ENCODE measurements at regions of chrX and their contacts with region 1.

Region 1: DNA sequence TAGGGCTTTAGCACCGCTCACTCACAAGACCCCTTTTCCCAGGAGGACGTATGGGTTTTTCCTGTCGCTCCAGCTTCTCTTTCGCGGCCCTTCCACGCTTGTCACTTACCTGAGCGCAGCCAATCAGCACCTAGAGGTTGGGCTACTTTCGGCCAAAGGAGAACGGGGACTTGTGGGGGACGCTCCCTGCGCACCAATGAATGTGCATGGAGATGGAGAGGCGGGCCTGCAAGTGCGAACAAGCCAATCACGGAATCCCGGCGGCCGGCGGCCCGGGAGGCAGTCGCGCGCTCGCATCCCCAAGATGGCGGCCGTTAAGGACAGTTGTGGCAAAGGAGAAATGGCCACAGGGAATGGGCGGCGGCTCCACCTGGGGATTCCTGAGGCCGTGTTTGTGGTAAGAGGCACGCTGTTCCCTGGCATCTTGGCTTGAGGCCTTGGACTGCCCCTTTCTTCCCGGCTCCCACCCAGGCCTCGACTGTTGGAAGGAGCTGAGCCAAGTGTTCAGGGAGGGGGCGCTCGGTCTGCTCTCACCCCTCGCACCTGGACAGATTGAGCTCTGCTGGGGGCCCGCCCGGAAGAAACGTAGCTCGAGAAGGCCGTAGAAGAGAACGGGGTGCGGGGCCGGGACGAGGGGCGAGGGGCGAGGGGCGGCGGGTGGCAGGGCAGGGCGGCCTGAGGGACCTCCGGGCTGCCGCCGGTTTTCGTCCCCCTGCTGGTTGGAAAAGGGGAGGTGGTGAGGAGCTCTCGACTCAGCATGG is at the start of gene VBP1:
- DNase-seq: peak; percentile 66
- ATAC-seq: peak; percentile 98
- H3K4me3 Mint-ChIP-seq: peak within 1 kb of the TSS; percentile 90
- H3K27ac Mint-ChIP-seq: peak within 1 kb of the TSS; percentile 91
- H3K4me1 Mint-ChIP-seq: peaks cover 18% of the 10 kb centered on the region
- H3K27me3 Mint-ChIP-seq: no peaks in the 10 kb centered on the region
- CTCF ChIP-seq: no peak
- total RNA-seq, gene VBP1: 40.6 and 43.9 TPM in 2 replicates

Region 2: DNA sequence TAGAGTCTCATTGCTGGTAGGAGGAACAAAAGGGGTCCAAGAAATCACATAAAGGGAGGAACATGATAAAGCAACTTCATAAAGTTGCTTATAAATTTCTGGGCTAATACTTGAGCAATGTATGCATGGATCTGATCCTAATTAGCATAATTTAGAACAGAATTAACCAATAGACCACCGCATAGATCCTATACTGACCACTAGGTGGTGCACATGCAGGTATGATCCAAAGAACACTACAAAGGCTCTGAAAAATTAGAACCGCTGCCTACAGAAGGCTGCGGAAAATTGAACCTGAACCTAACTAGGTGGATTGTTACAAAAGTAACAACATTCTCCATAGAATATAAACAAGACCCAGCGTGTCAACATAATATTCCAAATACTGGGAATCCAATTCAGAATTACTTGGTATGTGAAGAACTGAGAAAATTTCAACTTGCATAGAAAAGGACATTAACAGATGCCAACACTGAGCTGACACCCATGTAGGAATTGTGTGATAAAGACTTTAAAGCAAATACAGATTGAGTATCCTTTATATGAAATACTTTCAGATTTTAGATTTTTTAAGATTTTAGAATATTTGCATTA is 121.8 kb before region 1 on chrX:
- CTCF ChIA-PET with region 1: interaction called, 8 read pairs
- POLR2A ChIA-PET with region 1: no interaction called
- intact Hi-C with region 1: loop called (anchors 5 kb)
- DNase-seq: no peak
- ATAC-seq: peak; percentile 56
- H3K4me3 Mint-ChIP-seq: no peak overlapping the region
- H3K27ac Mint-ChIP-seq: no peak overlapping the region
- H3K4me1 Mint-ChIP-seq: no peaks in the 10 kb centered on the region
- H3K27me3 Mint-ChIP-seq: no peaks in the 10 kb centered on the region
- CTCF ChIP-seq: no peak

Region 3: DNA sequence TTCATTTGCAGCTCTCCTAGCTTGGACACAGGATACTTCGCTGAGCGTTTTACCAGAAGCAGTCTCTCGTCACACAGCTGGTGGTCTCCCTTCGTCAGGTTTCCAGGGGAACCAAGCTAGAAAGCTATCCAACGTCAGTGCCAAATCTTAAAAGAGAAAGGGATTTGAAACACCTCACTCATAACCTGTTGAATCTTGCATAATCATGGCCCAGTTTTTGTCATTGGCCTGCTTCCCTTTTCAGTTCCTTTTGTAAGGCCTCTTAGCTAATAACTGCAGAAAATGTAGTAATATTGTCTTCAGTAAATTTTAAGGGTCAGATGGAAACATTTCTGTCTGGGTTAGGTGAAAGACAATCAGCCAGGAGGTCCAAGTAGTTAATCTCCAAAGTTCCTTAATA is 25.9 kb after region 1 on chrX:
- CTCF ChIA-PET with region 1: no interaction called
- POLR2A ChIA-PET with region 1: no interaction called
- intact Hi-C with region 1: no loop called
- DNase-seq: no peak
- ATAC-seq: no peak
- H3K4me3 Mint-ChIP-seq: no peak overlapping the region
- H3K27ac Mint-ChIP-seq: peak overlapping the region; percentile 35
- H3K4me1 Mint-ChIP-seq: no peaks in the 10 kb centered on the region
- H3K27me3 Mint-ChIP-seq: no peaks in the 10 kb centered on the region
- CTCF ChIP-seq: no peak

Region 4: GRCh38 chrX:155263854-155264628 is 47.7 kb after region 1 on chrX and contains the start of gene RAB39B:
- CTCF ChIA-PET with region 1: no interaction called
- POLR2A ChIA-PET with region 1: interaction called, 7 read pairs
- intact Hi-C with region 1: loop called (anchors 1 kb)
- DNase-seq: peak; percentile 53
- ATAC-seq: peak; percentile 92
- H3K4me3 Mint-ChIP-seq: peak within 1 kb of the TSS; percentile 90
- H3K27ac Mint-ChIP-seq: peak within 1 kb of the TSS; percentile 90
- H3K4me1 Mint-ChIP-seq: peaks cover 22% of the 10 kb centered on the region
- H3K27me3 Mint-ChIP-seq: no peaks in the 10 kb centered on the region
- CTCF ChIP-seq: no peak
- total RNA-seq, gene RAB39B: 7.9 and 8.1 TPM in 2 replicates

Region 5: DNA sequence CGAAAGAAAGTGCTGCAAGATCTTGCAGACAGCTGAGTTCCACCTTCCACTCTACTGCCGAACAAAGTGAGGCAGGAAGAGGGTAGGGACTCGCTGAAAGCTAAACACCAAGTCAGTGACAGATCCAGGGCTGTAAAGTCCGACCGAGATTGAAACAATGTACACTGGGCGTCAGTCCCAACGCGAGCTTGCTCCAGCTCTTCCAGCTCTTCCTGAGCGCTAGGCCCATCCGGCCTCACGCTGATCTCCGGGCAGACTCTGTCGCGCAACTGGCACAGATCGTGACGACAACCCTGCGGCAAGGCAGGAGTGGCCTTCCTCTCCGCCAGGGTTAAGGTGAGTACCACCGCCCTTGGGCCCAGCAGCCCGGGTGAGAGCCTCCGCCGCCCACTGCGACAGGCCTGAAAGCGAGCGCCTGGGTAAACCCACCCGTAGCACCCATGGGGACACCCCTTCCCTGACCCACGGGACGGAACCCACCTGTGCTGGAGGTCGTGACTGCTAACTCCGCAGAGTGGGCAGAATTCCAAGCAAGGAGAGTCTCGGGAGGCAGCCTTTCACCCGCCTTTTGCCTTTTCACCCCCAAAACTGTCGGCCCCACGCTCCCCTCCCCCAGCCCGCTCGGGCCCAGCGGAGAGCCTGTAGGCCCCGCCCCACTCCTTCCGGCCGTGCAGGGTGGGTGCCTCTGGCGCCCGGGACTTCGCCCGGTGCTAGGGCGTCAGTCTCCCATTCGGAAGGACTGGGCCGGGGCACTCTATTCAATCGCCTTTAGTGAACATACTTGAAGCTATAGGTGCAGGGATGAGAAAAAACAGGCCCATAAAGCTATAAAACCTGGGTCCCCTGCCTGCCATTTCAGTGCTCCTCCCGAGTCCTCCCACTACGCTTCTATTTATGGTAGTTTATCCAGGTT is 396.2 kb after region 1 on chrX and contains the start of gene TMLHE:
- CTCF ChIA-PET with region 1: no interaction called
- POLR2A ChIA-PET with region 1: interaction called, 7 read pairs
- intact Hi-C with region 1: loop called (anchors 5 kb)
- DNase-seq: peak; percentile 51
- ATAC-seq: peak; percentile 98
- H3K4me3 Mint-ChIP-seq: peak within 1 kb of the TSS; percentile 94
- H3K27ac Mint-ChIP-seq: peak within 1 kb of the TSS; percentile 93
- H3K4me1 Mint-ChIP-seq: peaks cover 25% of the 10 kb centered on the region
- H3K27me3 Mint-ChIP-seq: no peaks in the 10 kb centered on the region
- CTCF ChIP-seq: no peak
- total RNA-seq, gene TMLHE: 14.0 and 19.3 TPM in 2 replicates